Endothelial cell of umbilical vein (primary cell): ENCODE measurements at regions of chr6 and their contacts with region 1.

Region 1: DNA sequence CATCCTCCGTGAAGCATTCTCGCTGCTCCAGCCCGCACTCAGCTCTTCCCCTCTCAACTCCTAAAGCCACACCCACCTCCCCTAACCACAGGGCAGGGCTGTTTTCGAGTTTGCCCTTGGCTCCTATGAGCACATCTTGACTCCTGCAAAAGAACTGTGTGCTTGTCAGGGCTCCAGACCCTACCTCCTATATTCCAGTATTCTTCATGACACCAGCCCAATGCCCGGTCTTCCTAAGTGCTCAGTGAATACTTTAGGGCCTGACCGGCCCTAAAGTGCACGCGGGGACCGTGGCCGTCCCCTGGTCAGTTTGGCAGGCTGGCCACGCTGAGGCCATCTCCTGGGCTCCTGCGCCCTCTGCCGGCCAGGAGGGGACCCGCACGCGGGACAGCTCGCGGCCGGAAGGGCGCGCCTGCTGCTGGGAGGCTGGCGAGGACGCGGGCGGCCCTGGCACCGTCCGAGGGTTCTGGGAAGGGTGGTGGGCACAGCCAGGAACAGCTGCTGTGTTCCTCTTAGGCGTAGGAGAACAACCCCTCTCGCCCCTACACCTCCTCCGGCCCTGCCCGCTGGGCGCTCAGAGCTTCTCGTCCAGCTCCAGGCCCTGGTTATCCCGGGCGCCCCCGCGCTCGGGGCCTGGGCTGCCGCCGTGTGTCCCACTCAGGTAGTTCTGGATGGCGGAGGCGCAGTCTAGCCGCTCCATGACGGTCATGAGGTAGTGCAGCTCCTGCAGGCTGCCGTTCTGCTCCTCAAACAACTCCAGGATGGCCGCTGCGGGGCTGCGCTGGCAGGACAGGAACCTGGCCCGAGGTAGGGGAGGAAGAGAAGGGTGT is 11.0 kb downstream of the UNC5CL start:
- DNase-seq: peak; percentile 63
- H3K4me3 ChIP-seq: peak overlapping the region in 2 of 3 experiments; percentile 28 to 30
- H3K27ac ChIP-seq: no peak overlapping the region
- H3K4me1 ChIP-seq: peaks cover 6% of the 10 kb centered on the region
- H3K27me3 ChIP-seq: peaks cover 0 to 4% of the 10 kb centered on the region in 2 experiments
- CTCF ChIP-seq: peak; percentile 97 to 98
- POLR2A ChIP-seq: no peak

Region 2: GRCh38 chr6:40550202-40551101 is 477.6 kb before region 1 on chr6:
- CTCF ChIA-PET with region 1: interaction called, 8 read pairs
- POLR2A ChIA-PET with region 1: no interaction called
- dilution Hi-C with region 1: no loop called
- intact Hi-C with region 1: loop called (anchors 5 kb)
- DNase-seq: peak; percentile 46
- H3K4me3 ChIP-seq: no peak overlapping the region
- H3K27ac ChIP-seq: no peak overlapping the region
- H3K4me1 ChIP-seq: no peaks in the 10 kb centered on the region
- H3K27me3 ChIP-seq: no peaks in the 10 kb centered on the region
- CTCF ChIP-seq: peak; percentile 56 to 70
- POLR2A ChIP-seq: no peak

Region 3: DNA sequence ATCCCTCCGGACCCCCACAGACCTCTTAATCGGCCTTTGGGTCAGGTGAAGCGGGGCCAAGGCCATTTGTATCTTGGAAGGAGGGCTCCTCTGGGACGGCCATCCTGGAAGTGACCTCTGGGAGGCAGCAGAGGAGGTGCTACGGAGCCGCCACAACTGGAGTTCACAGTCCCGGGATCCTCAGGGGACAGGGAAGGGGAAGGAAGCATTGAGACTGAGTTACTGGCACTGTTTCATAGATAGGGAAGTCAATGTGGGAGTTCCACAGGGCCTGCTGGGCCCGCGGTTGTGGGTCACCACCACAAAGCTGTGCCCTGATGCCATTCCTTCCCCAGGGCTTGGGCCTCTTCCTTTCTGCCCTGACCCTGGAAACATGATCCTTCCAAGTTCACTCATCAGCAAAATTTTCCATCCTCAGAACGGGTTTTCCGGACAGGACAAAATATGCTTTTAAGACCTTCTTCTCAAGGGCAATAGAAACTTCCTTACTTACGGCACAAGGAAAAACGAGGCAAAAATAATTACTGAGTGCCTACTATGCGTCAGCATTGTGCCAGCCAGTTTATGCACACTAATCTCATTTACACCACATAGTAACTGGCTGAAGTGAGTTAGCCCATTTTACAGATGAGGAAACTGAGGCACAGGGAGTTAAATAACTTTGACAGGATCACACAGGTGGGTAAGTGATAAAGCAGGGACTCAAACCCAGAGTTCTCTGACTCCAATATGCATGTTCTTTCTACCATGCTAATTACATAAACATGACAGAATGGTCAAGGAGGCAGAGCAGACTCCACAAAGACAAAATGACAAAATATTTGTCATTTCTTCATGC is 132.8 kb before region 1 on chr6:
- CTCF ChIA-PET with region 1: interaction called, 96 read pairs
- POLR2A ChIA-PET with region 1: no interaction called
- dilution Hi-C with region 1: no loop called
- intact Hi-C with region 1: loop called (anchors 1 kb)
- DNase-seq: peak; percentile 68
- H3K4me3 ChIP-seq: no peak overlapping the region
- H3K27ac ChIP-seq: no peak overlapping the region
- H3K4me1 ChIP-seq: peaks cover 8% of the 10 kb centered on the region
- H3K27me3 ChIP-seq: no peaks in the 10 kb centered on the region
- CTCF ChIP-seq: peak; percentile 65 to 69
- POLR2A ChIP-seq: no peak

Region 4: GRCh38 chr6:41039060-41039998 is 11.3 kb after region 1 on chr6 and contains the start of gene UNC5CL:
- CTCF ChIA-PET with region 1: interaction called, 21 read pairs
- POLR2A ChIA-PET with region 1: no interaction called
- dilution Hi-C with region 1: no loop called
- intact Hi-C with region 1: no loop called
- DNase-seq: peak; percentile 22
- H3K4me3 ChIP-seq: no peak within 1 kb of the TSS
- H3K27ac ChIP-seq: no peak within 1 kb of the TSS
- H3K4me1 ChIP-seq: peaks cover 2% of the 10 kb centered on the region
- H3K27me3 ChIP-seq: peaks cover 0 to 2% of the 10 kb centered on the region in 2 experiments
- CTCF ChIP-seq: peak; percentile 69 to 71
- POLR2A ChIP-seq: no peak
- total RNA-seq, gene UNC5CL: 0.20 and 0.32 TPM in 2 replicates

Region 5: DNA sequence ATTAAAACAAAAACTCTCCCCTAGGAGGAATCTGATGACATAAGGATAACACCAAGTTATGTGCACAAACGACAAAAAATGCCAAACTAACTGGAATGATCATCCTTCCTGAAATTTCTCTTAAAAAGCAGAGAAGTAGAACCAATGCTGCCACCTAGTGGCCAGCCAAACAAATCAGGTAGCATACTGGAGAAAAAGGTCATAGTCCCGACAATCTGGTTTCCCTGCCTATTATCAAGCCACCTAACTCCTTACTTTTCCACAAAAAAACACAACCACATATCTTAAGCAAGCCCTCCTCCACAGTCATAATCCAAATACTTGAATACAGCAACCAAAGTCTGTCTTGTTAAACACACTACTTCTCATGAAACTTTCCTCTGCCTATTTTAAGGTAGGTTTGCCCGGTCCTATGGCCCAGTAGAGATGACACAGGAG is 38.9 kb after region 1 on chr6:
- CTCF ChIA-PET with region 1: interaction called, 7 read pairs
- POLR2A ChIA-PET with region 1: no interaction called
- dilution Hi-C with region 1: no loop called
- intact Hi-C with region 1: loop called (anchors 1 kb)
- DNase-seq: peak; percentile 69
- H3K4me3 ChIP-seq: no peak overlapping the region
- H3K27ac ChIP-seq: no peak overlapping the region
- H3K4me1 ChIP-seq: peaks cover 8% of the 10 kb centered on the region
- H3K27me3 ChIP-seq: no peaks in the 10 kb centered on the region
- CTCF ChIP-seq: peak; percentile 62 to 68
- POLR2A ChIP-seq: no peak

Region 6: GRCh38 chr6:41618091-41618490 is 590.1 kb after region 1 on chr6:
- CTCF ChIA-PET with region 1: no interaction called
- POLR2A ChIA-PET with region 1: no interaction called
- dilution Hi-C with region 1: no loop called
- intact Hi-C with region 1: no loop called
- DNase-seq: no peak
- H3K4me3 ChIP-seq: no peak overlapping the region
- H3K27ac ChIP-seq: no peak overlapping the region
- H3K4me1 ChIP-seq: no peaks in the 10 kb centered on the region
- H3K27me3 ChIP-seq: peaks cover 14% of the 10 kb centered on the region in 2 experiments
- CTCF ChIP-seq: no peak
- POLR2A ChIP-seq: no peak